ENCODE measurements at regions of chr16 and their contacts with region 1.

Region 1: GRCh38 chr16:73878611-73879010 is 418.0 kb upstream of the PSMD7 start:
- DNase-seq: no peak
- ATAC-seq: peak; percentile 68 to 75
- H3K4me3 ChIP-seq: no peak overlapping the region
- H3K27ac ChIP-seq: no peak overlapping the region
- H3K4me1 ChIP-seq: no peaks in the 10 kb centered on the region
- H3K27me3 ChIP-seq: no peaks in the 10 kb centered on the region
- CTCF ChIP-seq: peak in 4 of 5 experiments; percentile 39 to 66 (median 52)
- POLR2A ChIP-seq: no peak

Region 2: GRCh38 chr16:72400257-72400882 is 1478.2 kb before region 1 on chr16:
- in situ Hi-C with region 1: no loop called
- intact Hi-C with region 1: loop called (anchors 5 kb)
- DNase-seq: peak in 1 of 2 donors; percentile 14
- ATAC-seq: peak; percentile 33 to 72
- H3K4me3 ChIP-seq: no peak overlapping the region
- H3K27ac ChIP-seq: no peak overlapping the region
- H3K4me1 ChIP-seq: no peaks in the 10 kb centered on the region
- H3K27me3 ChIP-seq: no peaks in the 10 kb centered on the region
- CTCF ChIP-seq: peak; percentile 29 to 63 (median 43)
- POLR2A ChIP-seq: no peak

Region 3: GRCh38 chr16:72501739-72502593 is 1376.6 kb before region 1 on chr16:
- in situ Hi-C with region 1: no loop called
- intact Hi-C with region 1: loop called (anchors 2 kb)
- DNase-seq: peak in 1 of 2 donors; percentile 24
- ATAC-seq: peak; percentile 52 to 55
- H3K4me3 ChIP-seq: no peak overlapping the region
- H3K27ac ChIP-seq: no peak overlapping the region
- H3K4me1 ChIP-seq: no peaks in the 10 kb centered on the region
- H3K27me3 ChIP-seq: no peaks in the 10 kb centered on the region
- CTCF ChIP-seq: peak; percentile 41 to 75 (median 67)
- POLR2A ChIP-seq: no peak

Region 4: GRCh38 chr16:73565262-73565661 is 313.3 kb before region 1 on chr16:
- in situ Hi-C with region 1: loop called in 1 of 4 experiments (anchors 10 kb)
- intact Hi-C with region 1: loop called (anchors 2 kb)
- DNase-seq: no peak
- ATAC-seq: no peak
- H3K4me3 ChIP-seq: no peak overlapping the region
- H3K27ac ChIP-seq: no peak overlapping the region
- H3K4me1 ChIP-seq: no peaks in the 10 kb centered on the region
- H3K27me3 ChIP-seq: no peaks in the 10 kb centered on the region
- CTCF ChIP-seq: peak in 2 of 5 experiments; percentile 14 to 24
- POLR2A ChIP-seq: no peak

Region 5: GRCh38 chr16:73713778-73714495 is 164.7 kb before region 1 on chr16:
- in situ Hi-C with region 1: loop called in 1 of 4 experiments (anchors 25 kb)
- intact Hi-C with region 1: loop called (anchors 2 kb)
- DNase-seq: no peak
- ATAC-seq: no peak
- H3K4me3 ChIP-seq: no peak overlapping the region
- H3K27ac ChIP-seq: no peak overlapping the region
- H3K4me1 ChIP-seq: no peaks in the 10 kb centered on the region
- H3K27me3 ChIP-seq: no peaks in the 10 kb centered on the region
- CTCF ChIP-seq: peak in 3 of 5 experiments; percentile 11 to 47 (median 36)
- POLR2A ChIP-seq: no peak

Region 6: DNA sequence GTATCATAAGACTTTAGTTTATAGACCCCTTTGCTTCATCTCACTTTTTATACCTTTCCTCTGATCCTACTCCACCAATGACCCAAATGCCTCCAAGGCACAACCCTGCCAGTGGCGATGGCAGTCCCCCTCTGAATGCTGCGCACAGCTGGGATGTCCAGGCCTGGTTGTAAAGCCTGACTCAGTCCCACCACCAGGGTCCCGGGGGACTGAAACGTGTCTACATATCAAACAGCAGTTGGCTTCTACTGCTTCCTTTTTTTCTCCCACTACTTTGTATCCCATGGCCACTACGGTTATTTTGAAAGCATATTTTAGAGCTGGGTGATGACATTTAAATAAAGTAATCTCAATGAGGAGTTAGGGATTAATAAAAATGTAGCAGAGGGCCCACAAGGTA is 88.2 kb after region 1 on chr16:
- in situ Hi-C with region 1: no loop called
- intact Hi-C with region 1: no loop called
- DNase-seq: no peak
- ATAC-seq: no peak
- H3K4me3 ChIP-seq: no peak overlapping the region
- H3K27ac ChIP-seq: no peak overlapping the region
- H3K4me1 ChIP-seq: no peaks in the 10 kb centered on the region
- H3K27me3 ChIP-seq: no peaks in the 10 kb centered on the region
- CTCF ChIP-seq: no peak
- POLR2A ChIP-seq: no peak